Heart right ventricle (tissue), 16 donors: ENCODE measurements at regions of chr20 and their contacts with region 1.

Region 1: DNA sequence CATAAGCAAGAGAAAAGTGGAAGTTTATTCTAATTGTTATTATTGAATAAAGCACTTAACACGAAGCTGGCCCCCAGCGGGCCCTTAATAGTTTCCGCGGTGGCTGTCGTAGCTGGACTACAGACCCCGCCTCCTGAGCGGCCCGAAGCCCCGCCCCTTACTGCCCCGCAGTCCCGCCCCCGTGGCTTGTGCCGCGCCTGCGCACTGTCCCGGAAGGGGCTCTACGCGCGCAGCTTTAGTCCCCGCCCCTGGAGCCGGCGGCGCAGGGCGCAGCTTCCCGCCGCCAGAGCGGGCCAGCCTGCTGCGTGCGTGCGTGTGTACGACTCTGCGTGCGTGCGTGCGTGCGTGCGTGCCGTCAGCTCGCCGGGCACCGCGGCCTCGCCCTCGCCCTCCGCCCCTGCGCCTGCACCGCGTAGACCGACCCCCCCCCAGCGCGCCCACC is at the start of gene VAPB:
- DNase-seq: peak; percentile 94 to 97
- ATAC-seq: peak; percentile 99 to 100 (median 100)
- H3K4me3 ChIP-seq: peak within 1 kb of the TSS; percentile 68 to 95 (median 82)
- H3K27ac ChIP-seq: peak within 1 kb of the TSS; percentile 70 to 99 (median 96)
- H3K4me1 ChIP-seq: peaks cover 3 to 47% (median 38%) of the 10 kb centered on the region in 9 donors
- H3K27me3 ChIP-seq: no peaks in the 10 kb centered on the region
- CTCF ChIP-seq: no peak
- total RNA-seq, gene VAPB: 59.9 to 89.9 (median 70.8) TPM

Region 2: GRCh38 chr20:58309575-58310290 is 79.2 kb before region 1 on chr20 and contains the start of gene RAB22A:
- intact Hi-C with region 1: loop called in 5 of 10 experiments (anchors 5 to 10 kb)
- DNase-seq: peak; percentile 77 to 85
- ATAC-seq: peak; percentile 87 to 95 (median 94)
- H3K4me3 ChIP-seq: peak within 1 kb of the TSS; percentile 97 to 100 (median 99)
- H3K27ac ChIP-seq: peak within 1 kb of the TSS; percentile 68 to 96 (median 90)
- H3K4me1 ChIP-seq: peaks cover 0 to 53% (median 18%) of the 10 kb centered on the region in 9 donors
- H3K27me3 ChIP-seq: no peaks in the 10 kb centered on the region
- CTCF ChIP-seq: peak in 1 of 9 donors; percentile 7
- total RNA-seq, gene RAB22A: 5.6 to 8.5 (median 7.1) TPM

Region 3: GRCh38 chr20:58447511-58448391 is 58.8 kb after region 1 on chr20:
- intact Hi-C with region 1: loop called in 1 of 10 experiments (anchors 10 kb)
- DNase-seq: no peak
- ATAC-seq: peak in 5 of 8 donors; percentile 40 to 72 (median 61)
- H3K4me3 ChIP-seq: no peak overlapping the region
- H3K27ac ChIP-seq: no peak overlapping the region
- H3K4me1 ChIP-seq: peaks cover 0 to 14% (median 0%) of the 10 kb centered on the region in 9 donors
- H3K27me3 ChIP-seq: no peaks in the 10 kb centered on the region
- CTCF ChIP-seq: peak; percentile 8 to 66 (median 60)

Region 4: DNA sequence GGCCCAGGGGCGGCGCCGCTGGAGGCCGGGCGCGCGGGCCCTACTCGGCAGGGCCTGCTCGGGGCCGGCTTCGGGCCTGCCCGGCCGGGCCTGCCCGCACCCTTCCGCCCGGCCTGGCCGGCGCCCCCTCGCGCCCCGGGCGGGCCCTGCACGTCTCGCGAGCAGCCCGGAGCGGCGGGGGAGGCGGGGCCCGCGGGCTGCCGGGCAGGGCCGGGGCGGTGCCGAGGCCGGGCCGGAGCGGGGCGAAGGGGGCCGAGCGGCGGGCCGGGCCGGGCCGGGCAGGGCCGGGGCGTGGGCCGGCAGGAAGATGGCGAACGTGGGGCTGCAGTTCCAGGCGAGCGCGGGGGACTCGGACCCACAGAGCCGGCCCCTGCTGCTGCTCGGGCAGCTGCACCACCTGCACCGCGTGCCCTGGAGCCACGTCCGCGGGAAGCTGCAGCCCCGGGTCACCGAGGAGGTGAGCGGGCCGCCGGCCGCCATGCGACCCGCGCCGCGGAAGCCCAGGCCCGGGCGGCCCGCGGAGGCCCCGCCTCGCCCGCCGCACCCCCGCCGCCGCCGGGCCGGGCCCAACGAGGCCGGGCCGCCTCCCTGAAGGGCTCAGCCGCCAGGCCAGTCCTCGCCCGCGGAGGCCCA is 303.8 kb after region 1 on chr20 and contains the start of gene NPEPL1:
- intact Hi-C with region 1: no loop called
- DNase-seq: peak; percentile 50 to 79
- ATAC-seq: peak; percentile 69 to 95 (median 86)
- H3K4me3 ChIP-seq: peak within 1 kb of the TSS in 9 of 10 donors; percentile 50 to 69 (median 59)
- H3K27ac ChIP-seq: peak within 1 kb of the TSS; percentile 74 to 99 (median 94)
- H3K4me1 ChIP-seq: peaks cover 14 to 47% (median 36%) of the 10 kb centered on the region in 9 donors
- H3K27me3 ChIP-seq: no peaks in the 10 kb centered on the region
- CTCF ChIP-seq: peak in 2 of 9 donors; percentile 25 to 33
- total RNA-seq, gene NPEPL1: 23.1 to 35.9 (median 29.9) TPM

Region 5: DNA sequence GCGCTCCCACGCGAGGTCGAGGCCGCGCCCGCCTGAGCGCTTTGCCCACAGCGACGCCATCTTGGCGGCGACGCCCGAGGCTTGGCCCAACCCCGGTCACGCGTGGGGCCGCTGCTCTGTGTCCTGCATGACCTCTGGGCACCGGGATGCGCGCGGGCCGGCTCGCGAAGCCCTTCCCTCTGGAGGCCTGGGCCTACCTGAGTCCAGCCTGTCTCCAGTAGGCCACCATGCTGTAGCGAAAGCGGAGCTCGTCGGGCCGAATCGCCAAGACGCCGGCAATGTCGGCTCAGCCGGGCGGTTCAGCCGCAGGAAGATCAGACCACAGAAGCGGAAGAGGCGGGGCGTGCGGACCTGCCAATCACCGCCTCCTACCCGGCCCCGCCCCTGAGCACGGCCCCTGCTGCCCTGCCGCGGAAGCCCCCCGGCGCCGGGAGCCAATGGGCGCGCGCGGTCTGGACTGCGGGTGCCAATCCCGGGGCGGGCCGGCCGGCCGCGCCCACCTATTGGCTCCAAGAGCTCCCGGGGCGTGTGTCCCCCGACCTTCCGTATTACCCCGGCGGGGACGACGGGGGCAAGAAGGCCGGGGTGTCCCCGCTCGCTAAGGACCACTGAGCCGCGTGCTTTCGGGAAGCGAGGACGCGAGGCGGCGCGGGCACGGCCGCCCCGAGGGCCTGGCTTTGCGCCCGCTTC is 643.3 kb after region 1 on chr20 and contains the start of gene ATP5F1E:
- intact Hi-C with region 1: loop called in 1 of 10 experiments (anchors 10 kb)
- DNase-seq: peak; percentile 95 to 97
- ATAC-seq: peak; percentile 99 to 100 (median 100)
- H3K4me3 ChIP-seq: peak within 1 kb of the TSS; percentile 55 to 96 (median 82)
- H3K27ac ChIP-seq: peak within 1 kb of the TSS; percentile 83 to 96 (median 94)
- H3K4me1 ChIP-seq: peaks cover 17 to 56% (median 47%) of the 10 kb centered on the region in 9 donors
- H3K27me3 ChIP-seq: no peaks in the 10 kb centered on the region
- CTCF ChIP-seq: no peak
- total RNA-seq, gene ATP5F1E: 105 to 155 (median 121) TPM